Tibial artery (tissue), 4 donors: ENCODE measurements at regions of chr9 and their contacts with region 1.

Region 1: GRCh38 chr9:83544002-83544698 is 5.9 kb upstream of the FRMD3 start:
- DNase-seq: no peak
- H3K4me3 ChIP-seq: no peak overlapping the region
- H3K27ac ChIP-seq: no peak overlapping the region
- H3K4me1 ChIP-seq: peaks cover 0 to 3% (median under 1%) of the 10 kb centered on the region in 4 donors
- H3K27me3 ChIP-seq: no peaks in the 10 kb centered on the region
- CTCF ChIP-seq: peak; percentile 62 to 66

Region 2: GRCh38 chr9:82680179-82680943 is 863.8 kb before region 1 on chr9:
- intact Hi-C with region 1: no loop called
- DNase-seq: no peak
- H3K4me3 ChIP-seq: no peak overlapping the region
- H3K27ac ChIP-seq: no peak overlapping the region
- H3K4me1 ChIP-seq: no peaks in the 10 kb centered on the region
- H3K27me3 ChIP-seq: no peaks in the 10 kb centered on the region
- CTCF ChIP-seq: no peak

Region 3: DNA sequence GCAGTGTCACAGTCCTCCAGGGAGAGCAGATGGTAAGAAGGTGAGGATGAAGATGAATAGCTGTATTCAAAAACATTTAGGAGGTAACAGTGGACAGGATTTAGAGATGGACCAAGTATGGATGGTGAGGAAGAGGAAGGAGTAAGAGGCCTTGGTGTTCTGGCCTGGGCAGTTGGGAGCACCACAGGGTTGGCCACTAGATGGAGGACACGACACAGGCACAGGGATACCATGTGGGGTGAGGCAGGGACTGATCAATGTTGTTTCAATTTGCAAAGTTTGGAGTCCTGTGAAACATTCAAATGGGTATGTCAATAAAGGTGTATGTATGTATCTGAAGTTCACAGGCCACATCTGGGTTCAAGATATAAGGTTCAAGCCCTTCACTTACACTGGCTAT is 340.1 kb before region 1 on chr9:
- intact Hi-C with region 1: loop called (anchors 10 kb)
- DNase-seq: no peak
- H3K4me3 ChIP-seq: no peak overlapping the region
- H3K27ac ChIP-seq: no peak overlapping the region
- H3K4me1 ChIP-seq: no peaks in the 10 kb centered on the region
- H3K27me3 ChIP-seq: no peaks in the 10 kb centered on the region
- CTCF ChIP-seq: no peak